Naive thymus-derived CD4-positive, alpha-beta T cell (primary cell): ENCODE measurements at regions of chr4 and their contacts with region 1.

Region 1: DNA sequence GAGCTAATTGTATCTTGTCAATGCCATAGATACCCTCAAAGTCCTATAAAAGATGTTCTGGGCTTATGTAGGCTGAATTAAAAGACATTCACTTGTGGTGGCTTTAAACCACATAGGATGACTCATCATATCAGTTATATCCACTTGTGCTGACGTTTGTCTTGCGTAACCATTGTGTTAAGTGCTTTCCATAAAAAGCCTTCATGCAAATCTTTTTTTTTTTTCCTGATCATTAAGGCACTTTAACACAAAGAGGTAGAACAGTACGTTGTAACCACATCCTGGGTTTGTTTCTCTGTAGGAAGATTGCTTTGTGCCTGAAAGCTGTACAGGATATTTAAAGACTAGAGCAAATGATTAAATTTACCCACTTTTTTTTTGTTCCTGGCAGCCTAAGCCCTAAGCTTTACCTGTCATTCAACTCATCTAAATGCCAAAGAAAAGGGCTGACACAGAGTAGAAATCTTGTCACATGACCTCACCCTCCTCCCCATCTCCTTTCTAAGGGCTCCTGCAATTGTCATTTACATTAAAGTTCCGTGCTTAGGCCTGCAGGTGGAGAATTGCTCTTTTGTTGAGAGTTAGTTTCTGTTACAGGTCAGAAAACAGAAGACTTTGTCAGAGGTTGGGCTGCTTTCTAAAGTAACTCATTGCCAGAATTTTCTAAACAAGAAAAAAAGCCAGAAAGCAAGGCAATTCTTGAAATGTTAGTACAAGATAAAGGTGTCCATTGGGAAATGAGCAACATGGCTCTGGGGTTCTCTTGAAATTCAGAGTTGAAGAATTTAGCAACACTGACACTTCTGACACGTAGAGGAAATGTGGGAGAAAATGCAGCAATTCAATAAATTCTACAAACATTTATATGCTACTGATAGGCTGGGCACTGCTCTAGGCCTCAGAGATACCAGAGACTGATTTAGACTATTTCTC is 555.6 kb downstream of the PPARGC1A start:
- DNase-seq: peak in 8 of 9 donors; percentile 31 to 89 (median 86)
- ATAC-seq: peak; percentile 91
- H3K4me3 ChIP-seq: peak overlapping the region; percentile 21
- H3K4me3 Mint-ChIP-seq: peak overlapping the region; percentile 34 to 78 (median 58)
- H3K27ac ChIP-seq: peak overlapping the region; percentile 45
- H3K27ac Mint-ChIP-seq: peak overlapping the region; percentile 68 to 97 (median 89)
- H3K4me1 ChIP-seq: peaks cover 6 to 20% of the 10 kb centered on the region in 2 donors
- H3K4me1 Mint-ChIP-seq: peaks cover 20 to 49% (median 35%) of the 10 kb centered on the region in 7 donors
- H3K27me3 ChIP-seq: no peaks in the 10 kb centered on the region
- H3K27me3 Mint-ChIP-seq: no peaks in the 10 kb centered on the region

Region 2: GRCh38 chr4:23290656-23291055 is 43.6 kb before region 1 on chr4:
- CTCF ChIA-PET with region 1: no interaction called
- POLR2A ChIA-PET with region 1: no interaction called
- intact Hi-C with region 1: loop called (anchors 1 kb)
- DNase-seq: no peak
- ATAC-seq: no peak
- H3K4me3 ChIP-seq: no peak overlapping the region
- H3K4me3 Mint-ChIP-seq: peak overlapping the region in 1 of 10 donors; percentile 82
- H3K27ac ChIP-seq: no peak overlapping the region
- H3K27ac Mint-ChIP-seq: no peak overlapping the region
- H3K4me1 ChIP-seq: no peaks in the 10 kb centered on the region
- H3K4me1 Mint-ChIP-seq: peaks cover 0 to 19% (median 6%) of the 10 kb centered on the region in 7 donors
- H3K27me3 ChIP-seq: no peaks in the 10 kb centered on the region
- H3K27me3 Mint-ChIP-seq: peaks cover 0 to 18% (median 0%) of the 10 kb centered on the region in 5 donors

Region 3: GRCh38 chr4:23320931-23321587 is 13.2 kb before region 1 on chr4:
- CTCF ChIA-PET with region 1: no interaction called
- POLR2A ChIA-PET with region 1: no interaction called
- intact Hi-C with region 1: loop called in 1 of 2 experiments (anchors 1 kb)
- DNase-seq: no peak
- ATAC-seq: no peak
- H3K4me3 ChIP-seq: no peak overlapping the region
- H3K4me3 Mint-ChIP-seq: no peak overlapping the region
- H3K27ac ChIP-seq: no peak overlapping the region
- H3K27ac Mint-ChIP-seq: no peak overlapping the region
- H3K4me1 ChIP-seq: no peaks in the 10 kb centered on the region
- H3K4me1 Mint-ChIP-seq: peaks cover 0 to 12% (median 2%) of the 10 kb centered on the region in 7 donors
- H3K27me3 ChIP-seq: no peaks in the 10 kb centered on the region
- H3K27me3 Mint-ChIP-seq: no peaks in the 10 kb centered on the region

Region 4: DNA sequence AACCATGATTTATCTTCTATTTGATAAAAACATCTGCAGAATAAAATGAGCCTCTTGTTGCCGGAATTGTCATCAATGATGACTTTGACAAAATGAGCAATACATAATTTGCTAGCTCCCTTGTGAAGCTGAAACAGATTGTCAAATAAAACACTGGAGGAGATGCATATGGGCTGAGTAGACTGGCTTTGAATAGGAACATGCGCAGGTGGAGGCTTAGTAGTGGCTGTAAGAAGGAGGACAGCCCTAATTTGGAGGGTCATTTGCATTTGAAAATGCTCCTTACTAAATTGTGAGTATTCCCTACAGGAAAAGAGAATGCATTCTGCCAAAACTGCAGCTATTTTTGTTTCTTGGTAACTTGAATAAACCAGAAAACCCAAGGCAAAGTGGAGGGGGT is 226.5 kb after region 1 on chr4:
- CTCF ChIA-PET with region 1: no interaction called
- POLR2A ChIA-PET with region 1: no interaction called
- intact Hi-C with region 1: no loop called
- DNase-seq: no peak
- ATAC-seq: no peak
- H3K4me3 ChIP-seq: no peak overlapping the region
- H3K4me3 Mint-ChIP-seq: no peak overlapping the region
- H3K27ac ChIP-seq: no peak overlapping the region
- H3K27ac Mint-ChIP-seq: no peak overlapping the region
- H3K4me1 ChIP-seq: no peaks in the 10 kb centered on the region
- H3K4me1 Mint-ChIP-seq: no peaks in the 10 kb centered on the region
- H3K27me3 ChIP-seq: no peaks in the 10 kb centered on the region
- H3K27me3 Mint-ChIP-seq: no peaks in the 10 kb centered on the region

Region 5: DNA sequence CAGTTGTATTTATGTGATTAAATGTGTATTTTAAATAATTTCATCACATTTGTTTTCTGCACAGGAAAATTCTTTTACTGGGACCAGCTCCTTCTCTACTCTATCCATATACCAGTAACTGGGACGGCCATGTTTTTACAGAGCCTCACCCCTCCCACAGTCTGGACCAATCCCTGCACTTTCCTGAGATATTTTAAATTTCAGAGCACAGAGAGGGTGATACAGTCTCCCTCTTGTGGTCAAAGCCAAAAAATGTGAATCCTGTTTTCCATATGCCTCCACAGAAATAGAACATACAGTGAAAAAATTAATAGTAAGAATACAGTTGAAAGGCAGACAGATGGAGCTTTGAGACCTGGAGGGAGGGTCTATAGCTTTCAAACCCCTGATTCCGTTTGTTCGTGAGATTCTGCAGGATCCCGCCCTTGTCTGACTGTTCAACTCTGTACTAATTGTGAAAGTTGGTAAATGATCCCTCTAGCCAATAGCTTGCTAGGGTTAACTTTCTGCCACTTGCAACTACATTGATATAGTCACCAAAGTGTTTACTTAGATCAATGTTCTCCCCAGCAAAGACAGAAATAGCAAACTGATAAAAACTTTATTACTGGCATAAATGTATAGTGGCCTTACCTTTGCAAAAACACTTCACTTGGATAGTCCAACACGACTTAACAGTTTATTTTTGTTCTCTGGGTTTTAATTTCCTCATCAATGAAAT is 383.5 kb after region 1 on chr4:
- CTCF ChIA-PET with region 1: no interaction called
- POLR2A ChIA-PET with region 1: no interaction called
- intact Hi-C with region 1: loop called in 1 of 2 experiments (anchors 1 kb)
- DNase-seq: no peak
- ATAC-seq: peak; percentile 24
- H3K4me3 ChIP-seq: no peak overlapping the region
- H3K4me3 Mint-ChIP-seq: no peak overlapping the region
- H3K27ac ChIP-seq: no peak overlapping the region
- H3K27ac Mint-ChIP-seq: no peak overlapping the region
- H3K4me1 ChIP-seq: no peaks in the 10 kb centered on the region
- H3K4me1 Mint-ChIP-seq: no peaks in the 10 kb centered on the region
- H3K27me3 ChIP-seq: no peaks in the 10 kb centered on the region
- H3K27me3 Mint-ChIP-seq: peaks cover 0 to 5% (median 0%) of the 10 kb centered on the region in 5 donors